ENCODE measurements at regions of chr11 and their contacts with region 1.

Region 1: GRCh38 chr11:130478204-130478701 is 29.8 kb downstream of the ADAMTS15 start:
- DNase-seq: peak in 1 of 2 donors; percentile 89
- H3K4me3 ChIP-seq: no peak overlapping the region
- H3K27ac ChIP-seq: peak overlapping the region; percentile 75 to 86
- H3K4me1 ChIP-seq: peaks cover 11 to 31% of the 10 kb centered on the region in 2 donors
- H3K27me3 ChIP-seq: no peaks in the 10 kb centered on the region
- CTCF ChIP-seq: no peak

Region 2: GRCh38 chr11:130490682-130491449 is 12.6 kb after region 1 on chr11:
- intact Hi-C with region 1: no loop called
- DNase-seq: no peak
- H3K4me3 ChIP-seq: no peak overlapping the region
- H3K27ac ChIP-seq: no peak overlapping the region
- H3K4me1 ChIP-seq: peaks cover 4 to 8% of the 10 kb centered on the region in 2 donors
- H3K27me3 ChIP-seq: no peaks in the 10 kb centered on the region
- CTCF ChIP-seq: no peak

Region 3: DNA sequence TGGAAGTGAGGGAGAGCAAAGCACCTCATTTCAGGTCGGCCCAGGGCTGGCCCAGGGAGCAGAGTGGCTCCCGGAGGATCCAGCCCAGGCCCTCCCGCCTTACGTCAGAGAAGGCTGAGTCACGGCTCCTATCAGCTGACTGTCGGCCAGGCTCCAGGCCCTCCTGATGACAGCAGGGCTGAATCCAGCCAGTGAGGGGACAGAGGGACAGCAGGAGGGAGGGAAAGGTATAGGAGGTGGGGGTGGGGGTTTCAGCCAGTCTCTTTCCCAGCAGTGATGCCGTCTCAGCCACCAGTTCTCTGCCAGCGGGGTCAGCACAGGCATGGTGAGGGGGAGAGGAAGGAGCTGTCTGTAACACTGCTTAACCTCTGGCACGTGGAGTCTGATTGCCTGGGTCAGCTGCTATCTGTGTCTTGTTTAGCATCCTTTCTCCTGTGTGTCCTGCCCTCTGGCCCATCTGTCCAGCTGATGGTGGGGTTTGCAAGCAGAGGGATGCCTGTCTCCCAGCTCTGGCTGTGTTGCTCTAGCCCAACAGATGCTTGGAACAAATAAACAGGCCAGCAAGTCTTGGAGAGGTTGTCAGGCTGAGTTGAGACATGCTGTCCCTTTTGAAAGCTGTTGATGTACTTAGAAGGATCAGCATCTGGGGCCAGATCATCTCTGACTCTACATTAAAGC is 44.2 kb after region 1 on chr11:
- intact Hi-C with region 1: loop called (anchors 2 kb)
- DNase-seq: peak; percentile 81 to 97
- H3K4me3 ChIP-seq: no peak overlapping the region
- H3K27ac ChIP-seq: peak overlapping the region; percentile 76 to 85
- H3K4me1 ChIP-seq: peaks cover 0 to 23% of the 10 kb centered on the region in 2 donors
- H3K27me3 ChIP-seq: no peaks in the 10 kb centered on the region
- CTCF ChIP-seq: no peak

Region 4: DNA sequence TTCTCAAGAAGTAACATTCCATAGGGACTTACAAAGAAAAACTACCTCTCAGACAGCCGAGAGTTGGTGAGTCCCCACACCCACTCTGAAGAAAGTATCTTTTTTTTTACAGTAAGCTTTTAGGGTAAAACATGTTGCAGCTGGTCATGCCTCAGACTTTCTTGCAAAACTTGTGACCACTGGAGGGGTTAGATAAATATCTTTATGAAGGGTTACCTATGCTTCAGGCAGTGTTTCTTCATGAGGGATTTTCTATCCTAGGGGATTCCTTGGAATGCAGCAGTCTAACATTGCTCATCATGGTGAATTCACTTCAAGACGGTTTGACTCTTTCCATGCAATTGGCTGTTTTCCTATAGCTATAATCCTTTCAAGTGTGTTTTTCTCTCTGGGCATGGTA is 458.8 kb after region 1 on chr11:
- intact Hi-C with region 1: no loop called
- DNase-seq: no peak
- H3K4me3 ChIP-seq: no peak overlapping the region
- H3K27ac ChIP-seq: no peak overlapping the region
- H3K4me1 ChIP-seq: no peaks in the 10 kb centered on the region
- H3K27me3 ChIP-seq: no peaks in the 10 kb centered on the region
- CTCF ChIP-seq: no peak